AG04449 (cell line): ENCODE measurements at regions of chr5 and their contacts with region 1.

Region 1: DNA sequence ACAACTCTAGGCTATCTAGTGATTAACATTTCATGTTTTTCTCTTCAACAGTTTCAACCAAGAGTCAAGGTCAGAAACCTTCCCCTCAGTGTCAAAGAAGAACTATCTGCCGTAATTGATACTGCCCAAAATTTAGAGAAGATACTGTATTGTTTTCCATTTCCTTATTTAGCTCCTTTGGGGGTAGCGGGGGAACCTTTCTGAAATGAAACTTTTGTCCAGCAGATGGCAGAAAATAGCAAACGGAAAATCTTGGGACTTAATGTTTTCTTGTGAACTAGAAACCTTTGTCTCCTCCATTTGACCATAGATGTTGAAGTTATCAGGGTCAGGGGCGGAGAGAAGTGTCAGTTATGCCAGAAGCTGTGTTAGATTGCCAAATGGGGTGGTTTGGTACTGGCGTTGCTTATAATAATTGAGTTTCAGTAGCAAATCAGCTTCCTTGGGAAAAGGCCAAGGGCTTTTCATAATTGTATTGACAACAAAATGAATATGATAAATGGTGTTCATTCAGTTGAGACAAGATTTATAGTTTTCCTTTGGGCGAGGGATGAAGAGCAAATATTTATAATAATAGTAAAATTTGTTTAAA is 101.7 kb upstream of the TLX3 start:
- DNase-seq: no peak
- H3K4me3 ChIP-seq: no peak overlapping the region
- CTCF ChIP-seq: peak; percentile 40

Region 2: GRCh38 chr5:171192111-171192510 is 15.2 kb before region 1 on chr5:
- CTCF ChIA-PET with region 1: interaction called, 76 read pairs
- POLR2A ChIA-PET with region 1: no interaction called
- DNase-seq: no peak
- H3K4me3 ChIP-seq: no peak overlapping the region
- CTCF ChIP-seq: no peak

Region 3: DNA sequence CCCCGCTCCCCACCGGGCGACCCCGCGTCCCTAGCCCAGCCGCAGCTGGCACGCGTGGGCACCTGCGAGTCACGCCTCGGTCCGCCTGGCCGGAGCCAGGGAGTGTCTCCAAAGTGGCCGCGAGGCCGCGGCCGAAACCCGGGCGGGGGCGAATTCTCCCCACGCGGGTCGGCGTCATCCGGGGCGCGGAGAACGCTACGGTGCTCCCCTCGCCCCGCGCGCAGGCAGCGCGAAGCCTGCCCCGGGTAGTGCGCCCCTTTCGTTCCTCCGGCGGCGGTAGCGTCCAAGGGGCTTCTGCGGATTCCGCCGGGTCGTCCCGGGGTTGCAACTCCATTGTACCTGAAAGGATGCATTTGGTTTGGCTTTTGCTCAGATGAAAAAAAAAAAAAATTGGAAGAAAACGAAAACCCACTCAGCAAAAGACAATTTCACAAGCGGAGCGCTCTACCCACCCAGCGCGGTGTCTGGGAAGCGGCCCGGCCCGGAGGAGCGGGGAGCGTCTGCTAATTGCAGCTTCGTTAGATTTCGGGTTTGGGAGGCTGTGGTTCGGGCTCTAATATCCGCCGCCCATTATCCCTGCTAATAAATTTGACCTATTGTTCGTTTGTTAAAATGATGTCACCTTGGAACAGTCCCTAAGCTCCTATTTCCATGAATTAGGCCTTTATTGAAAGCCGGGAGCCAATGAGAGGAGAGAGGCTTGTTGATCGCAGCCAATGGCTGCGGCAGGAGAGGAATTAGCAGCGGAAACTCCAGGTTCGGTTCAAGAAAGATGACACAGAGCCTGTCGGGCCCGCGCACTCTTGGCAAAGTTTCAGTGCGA is 101.3 kb after region 1 on chr5 and contains the start of gene TLX3:
- CTCF ChIA-PET with region 1: interaction called, 11 read pairs
- POLR2A ChIA-PET with region 1: no interaction called
- DNase-seq: no peak
- H3K4me3 ChIP-seq: no peak within 1 kb of the TSS
- CTCF ChIP-seq: no peak

Region 4: DNA sequence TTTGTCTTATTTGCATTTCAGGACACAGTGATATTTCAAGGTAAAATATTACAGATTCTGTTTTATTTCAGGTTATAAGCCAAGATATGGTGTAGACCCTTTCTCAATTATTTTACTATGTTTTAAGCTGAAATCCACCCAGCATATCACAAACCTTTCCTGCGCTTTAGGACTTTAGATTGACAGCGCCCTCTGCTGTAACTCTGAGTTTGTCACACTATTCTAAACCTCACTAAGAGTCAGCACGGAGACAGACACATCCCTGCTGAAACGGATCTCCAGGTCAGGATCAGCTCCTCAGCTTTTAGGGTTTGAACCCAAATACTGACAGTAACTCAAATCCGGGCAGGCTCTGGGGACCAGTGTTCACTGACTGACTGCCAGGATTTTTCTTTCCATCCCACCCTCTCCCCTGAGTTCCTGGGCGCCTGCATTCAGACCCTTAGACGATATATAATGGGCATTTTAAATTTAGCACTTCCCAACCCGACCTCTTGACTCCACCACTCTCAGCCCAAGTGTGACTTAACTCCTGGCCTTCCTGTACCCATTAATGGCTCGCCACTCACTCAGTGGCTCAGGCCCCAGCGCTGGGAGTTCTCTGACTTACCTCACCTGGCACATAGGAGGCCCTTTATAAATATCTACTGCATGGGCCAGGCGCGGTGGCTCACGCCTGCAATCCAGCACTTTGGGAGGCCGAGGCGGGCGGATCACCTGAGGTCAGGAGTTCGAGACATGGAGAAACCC is 135.2 kb after region 1 on chr5:
- CTCF ChIA-PET with region 1: interaction called, 460 read pairs
- POLR2A ChIA-PET with region 1: no interaction called
- DNase-seq: peak; percentile 7
- H3K4me3 ChIP-seq: no peak overlapping the region
- CTCF ChIP-seq: peak; percentile 67